Gastrocnemius medialis (tissue), 4 donors: ENCODE measurements at regions of chr1 and their contacts with region 1.

Region 1: GRCh38 chr1:206663832-206664652 is 20.7 kb upstream of the MAPKAPK2 start:
- DNase-seq: peak; percentile 62 to 81
- ATAC-seq: peak; percentile 70 to 75
- H3K4me3 ChIP-seq: peak overlapping the region; percentile 35 to 46 (median 42)
- H3K27ac ChIP-seq: peak overlapping the region; percentile 83 to 91 (median 89)
- H3K4me1 ChIP-seq: peaks cover 34 to 51% of the 10 kb centered on the region in 2 donors
- H3K27me3 ChIP-seq: no peaks in the 10 kb centered on the region
- CTCF ChIP-seq: peak; percentile 90 to 97 (median 94)
- POLR2A ChIP-seq: peak in 1 of 2 donors; percentile 29

Region 2: DNA sequence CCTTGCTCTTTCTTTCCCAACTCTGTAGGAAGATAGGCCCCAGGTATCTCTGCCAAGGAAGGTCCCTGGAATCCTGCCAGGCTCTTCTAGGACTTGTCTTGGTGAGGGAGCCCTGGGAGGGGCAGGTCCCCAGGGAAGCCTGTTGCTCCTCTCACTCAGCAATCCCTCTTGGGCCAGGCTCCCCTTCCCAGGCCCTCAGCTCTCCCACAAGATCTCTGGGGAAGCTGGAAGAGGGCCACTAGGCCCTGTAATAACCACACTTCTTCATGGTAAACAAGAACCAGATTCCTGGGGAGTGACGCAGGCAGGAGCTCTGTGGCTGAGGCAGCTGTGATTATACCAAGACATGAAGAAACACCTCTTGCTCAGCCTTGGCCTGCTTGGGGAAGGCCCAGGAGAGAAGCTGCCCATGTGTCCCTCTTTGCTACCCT is 10.7 kb after region 1 on chr1:
- in situ Hi-C with region 1: no loop called
- intact Hi-C with region 1: no loop called
- DNase-seq: peak; percentile 62 to 72
- ATAC-seq: peak; percentile 82 to 89
- H3K4me3 ChIP-seq: no peak overlapping the region
- H3K27ac ChIP-seq: peak overlapping the region; percentile 50 to 66 (median 62)
- H3K4me1 ChIP-seq: peaks cover 8 to 30% of the 10 kb centered on the region in 2 donors
- H3K27me3 ChIP-seq: no peaks in the 10 kb centered on the region
- CTCF ChIP-seq: no peak
- POLR2A ChIP-seq: no peak

Region 3: GRCh38 chr1:206890690-206891089 is 226.6 kb after region 1 on chr1:
- in situ Hi-C with region 1: no loop called
- intact Hi-C with region 1: loop called (anchors 5 kb)
- DNase-seq: no peak
- ATAC-seq: peak in 1 of 2 donors; percentile 34
- H3K4me3 ChIP-seq: peak overlapping the region in 1 of 4 donors; percentile 27
- H3K27ac ChIP-seq: no peak overlapping the region
- H3K4me1 ChIP-seq: peaks cover 17 to 25% of the 10 kb centered on the region in 2 donors
- H3K27me3 ChIP-seq: no peaks in the 10 kb centered on the region
- CTCF ChIP-seq: no peak
- POLR2A ChIP-seq: no peak